Activated naive CD4-positive, alpha-beta T cell treated with anti-CD3 and anti-CD28 coated beads for 36 hours (primary cell): ENCODE measurements at regions of chr13 and their contacts with region 1.

Region 1: DNA sequence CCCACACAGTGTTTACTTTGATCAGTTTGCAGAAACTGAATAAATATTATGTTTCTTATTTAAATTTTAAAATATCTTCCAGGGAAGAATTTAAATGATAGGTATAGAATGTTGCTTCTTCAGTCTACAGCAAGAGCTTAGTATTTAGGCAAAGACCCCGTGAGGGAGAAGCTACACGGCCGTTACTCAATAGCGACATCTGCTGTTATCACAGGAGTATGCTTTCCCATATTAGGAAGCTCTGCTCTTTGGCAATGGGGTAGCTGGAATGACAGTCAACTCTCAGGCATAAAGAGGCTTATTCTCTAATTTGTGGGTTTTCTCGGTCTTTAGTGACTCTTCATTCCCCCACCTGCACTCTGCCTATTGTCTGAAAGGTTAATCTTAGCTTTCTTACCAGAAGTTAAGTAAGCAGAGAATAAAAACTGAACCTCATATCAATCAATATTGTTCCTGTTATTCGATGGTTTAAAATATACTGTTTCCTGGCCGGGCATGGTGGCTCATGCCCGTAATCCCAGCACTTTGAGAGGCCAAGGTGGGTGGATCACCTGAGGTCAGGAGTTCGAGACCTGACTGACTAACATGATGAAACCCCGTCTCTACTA is 13.2 kb upstream of the LHFPL6 start:
- DNase-seq: peak; percentile 51
- H3K4me3 Mint-ChIP-seq: no peak overlapping the region
- H3K27ac Mint-ChIP-seq: no peak overlapping the region
- H3K4me1 Mint-ChIP-seq: no peaks in the 10 kb centered on the region
- H3K27me3 Mint-ChIP-seq: peaks cover 5% of the 10 kb centered on the region

Region 2: DNA sequence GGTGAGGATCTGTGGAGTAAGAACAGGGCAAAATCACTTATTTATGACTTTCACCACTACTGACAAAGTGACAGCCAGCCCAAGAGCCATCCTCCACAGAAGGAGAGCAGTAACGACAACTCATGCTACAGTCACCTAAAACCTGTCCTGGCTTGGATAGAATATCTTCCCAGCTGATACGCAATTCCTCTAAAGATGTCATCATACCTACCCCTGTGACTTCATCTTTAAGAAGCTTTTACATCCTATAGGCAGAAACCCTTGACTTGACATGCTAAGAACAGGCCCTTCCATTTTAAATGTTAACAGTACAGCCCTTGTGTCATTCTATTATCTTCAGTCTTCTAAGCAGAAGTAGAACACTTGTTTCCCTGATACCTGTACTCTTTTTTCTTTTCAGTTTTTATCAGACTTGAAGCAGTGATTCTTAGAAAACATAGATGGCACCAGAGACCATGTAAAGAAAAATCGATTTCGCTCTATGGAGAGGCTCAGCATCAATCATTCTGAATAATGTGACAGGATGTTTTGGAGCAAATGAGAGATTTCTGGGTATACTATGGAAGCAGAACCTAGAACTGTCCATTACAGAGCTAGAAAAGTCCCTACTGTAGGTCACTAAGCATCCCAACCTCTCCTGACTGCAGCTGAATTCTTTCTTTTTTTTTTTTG is 645.7 kb before region 1 on chr13:
- CTCF ChIA-PET with region 1: interaction called, 3 read pairs
- intact Hi-C with region 1: loop called (anchors 5 kb)
- DNase-seq: no peak
- H3K4me3 Mint-ChIP-seq: no peak overlapping the region
- H3K27ac Mint-ChIP-seq: no peak overlapping the region
- H3K4me1 Mint-ChIP-seq: no peaks in the 10 kb centered on the region
- H3K27me3 Mint-ChIP-seq: peaks cover 2% of the 10 kb centered on the region

Region 3: GRCh38 chr13:39144941-39145533 is 471.2 kb before region 1 on chr13:
- CTCF ChIA-PET with region 1: interaction called, 16 read pairs
- intact Hi-C with region 1: loop called (anchors 1 kb)
- DNase-seq: peak; percentile 64
- H3K4me3 Mint-ChIP-seq: no peak overlapping the region
- H3K27ac Mint-ChIP-seq: no peak overlapping the region
- H3K4me1 Mint-ChIP-seq: peaks cover 25% of the 10 kb centered on the region
- H3K27me3 Mint-ChIP-seq: peaks cover 33% of the 10 kb centered on the region

Region 4: GRCh38 chr13:39196958-39197646 is 419.1 kb before region 1 on chr13:
- CTCF ChIA-PET with region 1: no interaction called
- intact Hi-C with region 1: no loop called
- DNase-seq: no peak
- H3K4me3 Mint-ChIP-seq: no peak overlapping the region
- H3K27ac Mint-ChIP-seq: peak overlapping the region; percentile 60
- H3K4me1 Mint-ChIP-seq: peaks cover 11% of the 10 kb centered on the region
- H3K27me3 Mint-ChIP-seq: peaks cover 17% of the 10 kb centered on the region

Region 5: DNA sequence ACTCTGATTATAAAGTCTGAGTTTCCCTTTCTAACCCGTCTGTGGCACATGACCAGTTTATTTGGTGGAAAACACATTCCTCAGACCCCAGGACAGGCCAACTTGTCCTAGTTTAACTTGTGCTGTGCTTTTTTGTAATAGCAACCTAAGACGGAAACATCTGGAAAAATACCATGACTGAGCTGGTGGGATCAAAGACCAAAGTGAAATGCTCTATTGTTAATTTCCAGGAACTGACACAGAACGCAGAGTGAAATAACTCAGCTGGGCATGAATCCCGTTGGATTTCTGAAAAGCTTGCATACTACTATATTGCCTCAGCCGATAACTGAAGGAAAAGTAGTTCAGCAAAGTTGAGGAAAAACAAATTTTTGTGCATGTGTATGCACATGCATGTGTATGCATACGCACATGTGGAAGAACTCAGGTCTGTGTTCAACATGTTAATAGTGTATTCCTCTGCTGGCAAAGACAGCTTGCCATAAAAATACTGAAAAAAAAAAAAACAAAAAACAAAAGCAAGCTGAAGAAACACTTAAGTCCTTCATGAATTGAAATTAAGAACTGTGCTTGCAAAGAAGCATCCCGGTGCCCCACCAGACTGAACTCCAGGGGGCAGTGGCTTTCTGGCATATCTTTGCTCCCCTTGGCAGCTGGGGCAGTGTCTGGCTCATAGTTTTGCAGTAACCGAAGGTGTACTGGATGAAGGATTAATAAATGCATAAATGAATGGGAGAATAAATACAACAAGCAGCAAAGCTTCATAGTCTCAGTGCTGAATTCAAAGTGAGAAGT is 201.0 kb before region 1 on chr13:
- CTCF ChIA-PET with region 1: interaction called, 5 read pairs
- intact Hi-C with region 1: loop called (anchors 1 kb)
- DNase-seq: peak; percentile 21
- H3K4me3 Mint-ChIP-seq: no peak overlapping the region
- H3K27ac Mint-ChIP-seq: no peak overlapping the region
- H3K4me1 Mint-ChIP-seq: no peaks in the 10 kb centered on the region
- H3K27me3 Mint-ChIP-seq: peaks cover 24% of the 10 kb centered on the region

Region 6: GRCh38 chr13:39575638-39576238 is 40.5 kb before region 1 on chr13:
- CTCF ChIA-PET with region 1: interaction called, 10 read pairs
- intact Hi-C with region 1: no loop called
- DNase-seq: no peak
- H3K4me3 Mint-ChIP-seq: no peak overlapping the region
- H3K27ac Mint-ChIP-seq: no peak overlapping the region
- H3K4me1 Mint-ChIP-seq: no peaks in the 10 kb centered on the region
- H3K27me3 Mint-ChIP-seq: peaks cover 5% of the 10 kb centered on the region

Region 7: GRCh38 chr13:39676315-39676876 is 60.2 kb after region 1 on chr13:
- CTCF ChIA-PET with region 1: interaction called, 7 read pairs
- intact Hi-C with region 1: loop called (anchors 2 kb)
- DNase-seq: peak; percentile 23
- H3K4me3 Mint-ChIP-seq: no peak overlapping the region
- H3K27ac Mint-ChIP-seq: no peak overlapping the region
- H3K4me1 Mint-ChIP-seq: peaks cover 4% of the 10 kb centered on the region
- H3K27me3 Mint-ChIP-seq: no peaks in the 10 kb centered on the region